ENCODE measurements at regions of chr11 and their contacts with region 1.

Region 1: DNA sequence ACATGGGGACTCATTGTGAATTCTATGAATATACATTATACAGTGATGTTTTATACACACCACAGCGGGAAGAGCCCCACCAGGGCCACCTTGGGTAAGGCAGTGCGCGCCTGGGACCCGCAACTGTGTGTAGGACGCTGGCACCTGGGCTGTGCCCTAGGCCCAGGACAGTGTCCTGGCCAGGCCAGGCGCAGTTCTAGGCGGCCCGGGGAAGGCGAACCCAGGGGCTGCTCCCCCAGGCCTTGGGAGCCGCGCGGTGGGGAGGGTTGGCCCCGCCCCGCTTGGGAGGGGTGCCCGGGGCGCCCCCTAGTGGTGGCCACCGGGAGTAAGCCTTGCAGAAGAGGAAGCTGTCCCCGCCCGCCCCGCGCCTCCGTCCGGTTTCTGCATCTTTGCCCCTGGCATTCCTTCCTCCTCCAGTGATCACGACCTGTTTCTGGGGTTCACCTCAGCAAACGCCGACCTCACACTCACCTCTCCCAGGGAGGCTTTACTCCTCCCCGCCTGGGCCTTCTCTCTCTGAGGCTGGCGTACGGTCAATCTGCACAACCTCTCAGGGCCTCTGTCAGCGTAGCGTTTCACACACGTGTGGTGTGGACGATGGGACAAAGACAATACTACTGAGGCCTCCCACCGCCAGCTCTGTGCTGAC is 9.5 kb upstream of the EHD1 start:
- DNase-seq: peak; percentile 62
- H3K4me3 ChIP-seq: no peak overlapping the region
- H3K27ac ChIP-seq: no peak overlapping the region
- H3K4me1 ChIP-seq: peaks cover 12% of the 10 kb centered on the region
- H3K27me3 ChIP-seq: no peaks in the 10 kb centered on the region
- CTCF ChIP-seq: peak; percentile 92 to 99
- POLR2A ChIP-seq: peak; percentile 37

Region 2: GRCh38 chr11:64810271-64810890 is 77.5 kb before region 1 on chr11 and contains the start of gene MEN1:
- CTCF ChIA-PET with region 1: no interaction called
- POLR2A ChIA-PET with region 1: no interaction called
- dilution Hi-C with region 1: no loop called
- intact Hi-C with region 1: no loop called
- DNase-seq: peak; percentile 97
- H3K4me3 ChIP-seq: peak within 1 kb of the TSS; percentile 62 to 84 (median 70)
- H3K27ac ChIP-seq: no peak within 1 kb of the TSS
- H3K4me1 ChIP-seq: peaks cover 8% of the 10 kb centered on the region
- H3K27me3 ChIP-seq: no peaks in the 10 kb centered on the region
- CTCF ChIP-seq: no peak
- POLR2A ChIP-seq: peak; percentile 87
- total RNA-seq, gene MEN1: 41.1 and 41.6 TPM in 2 replicates

Region 3: GRCh38 chr11:64854534-64855429 is 33.1 kb before region 1 on chr11:
- CTCF ChIA-PET with region 1: interaction called, 168 read pairs
- POLR2A ChIA-PET with region 1: no interaction called
- dilution Hi-C with region 1: loop called (anchors 10 kb)
- intact Hi-C with region 1: no loop called
- DNase-seq: peak; percentile 91
- H3K4me3 ChIP-seq: no peak overlapping the region
- H3K27ac ChIP-seq: peak overlapping the region; percentile 74
- H3K4me1 ChIP-seq: peaks cover 37% of the 10 kb centered on the region
- H3K27me3 ChIP-seq: no peaks in the 10 kb centered on the region
- CTCF ChIP-seq: no peak
- POLR2A ChIP-seq: peak; percentile 82

Region 4: DNA sequence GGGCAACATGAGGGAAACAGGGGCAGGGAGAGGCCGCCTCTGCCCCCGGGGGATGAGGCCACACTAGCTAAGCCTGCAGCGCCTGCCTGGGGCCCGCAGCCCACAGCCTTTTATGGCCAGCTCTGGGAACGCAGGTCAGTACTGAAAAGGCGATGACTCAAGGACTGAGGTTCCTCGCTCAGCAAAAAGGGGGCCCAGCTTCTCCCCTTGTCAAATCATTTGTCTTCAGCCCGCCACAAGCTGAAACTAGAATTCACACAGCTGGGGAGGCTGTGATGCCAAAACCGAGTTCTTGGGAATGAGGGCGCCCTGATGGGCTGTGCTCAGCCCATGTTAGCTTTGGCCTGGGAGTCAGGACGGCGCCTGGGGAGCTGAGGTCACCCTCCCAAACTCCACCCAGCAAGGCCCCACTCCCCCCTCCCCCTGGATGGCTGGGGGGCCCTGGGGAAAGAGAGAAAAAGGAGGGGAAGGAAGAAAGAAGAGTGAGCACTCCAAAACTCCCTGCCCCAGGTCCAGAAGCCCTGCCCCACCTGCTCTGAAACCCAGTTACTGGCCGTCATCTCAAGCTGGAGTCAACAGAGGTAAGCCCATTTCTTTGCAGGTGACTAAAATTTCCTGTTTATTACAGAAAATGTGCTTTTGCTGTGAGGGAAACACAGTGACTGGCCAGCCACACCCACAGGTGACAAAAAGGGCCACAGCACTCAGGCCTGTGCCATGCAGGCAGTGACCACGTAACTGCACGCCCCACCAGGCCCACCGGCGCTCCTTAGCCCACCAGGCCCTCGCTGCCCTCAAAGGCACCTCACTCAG is 23.2 kb before region 1 on chr11:
- CTCF ChIA-PET with region 1: interaction called, 55 read pairs
- POLR2A ChIA-PET with region 1: no interaction called
- dilution Hi-C with region 1: no loop called
- intact Hi-C with region 1: no loop called
- DNase-seq: peak; percentile 53
- H3K4me3 ChIP-seq: no peak overlapping the region
- H3K27ac ChIP-seq: peak overlapping the region; percentile 74
- H3K4me1 ChIP-seq: peaks cover 45% of the 10 kb centered on the region
- H3K27me3 ChIP-seq: no peaks in the 10 kb centered on the region
- CTCF ChIP-seq: no peak
- POLR2A ChIP-seq: no peak